Naive thymus-derived CD8-positive, alpha-beta T cell (primary cell): ENCODE measurements at regions of chr17 and their contacts with region 1.

Region 1: DNA sequence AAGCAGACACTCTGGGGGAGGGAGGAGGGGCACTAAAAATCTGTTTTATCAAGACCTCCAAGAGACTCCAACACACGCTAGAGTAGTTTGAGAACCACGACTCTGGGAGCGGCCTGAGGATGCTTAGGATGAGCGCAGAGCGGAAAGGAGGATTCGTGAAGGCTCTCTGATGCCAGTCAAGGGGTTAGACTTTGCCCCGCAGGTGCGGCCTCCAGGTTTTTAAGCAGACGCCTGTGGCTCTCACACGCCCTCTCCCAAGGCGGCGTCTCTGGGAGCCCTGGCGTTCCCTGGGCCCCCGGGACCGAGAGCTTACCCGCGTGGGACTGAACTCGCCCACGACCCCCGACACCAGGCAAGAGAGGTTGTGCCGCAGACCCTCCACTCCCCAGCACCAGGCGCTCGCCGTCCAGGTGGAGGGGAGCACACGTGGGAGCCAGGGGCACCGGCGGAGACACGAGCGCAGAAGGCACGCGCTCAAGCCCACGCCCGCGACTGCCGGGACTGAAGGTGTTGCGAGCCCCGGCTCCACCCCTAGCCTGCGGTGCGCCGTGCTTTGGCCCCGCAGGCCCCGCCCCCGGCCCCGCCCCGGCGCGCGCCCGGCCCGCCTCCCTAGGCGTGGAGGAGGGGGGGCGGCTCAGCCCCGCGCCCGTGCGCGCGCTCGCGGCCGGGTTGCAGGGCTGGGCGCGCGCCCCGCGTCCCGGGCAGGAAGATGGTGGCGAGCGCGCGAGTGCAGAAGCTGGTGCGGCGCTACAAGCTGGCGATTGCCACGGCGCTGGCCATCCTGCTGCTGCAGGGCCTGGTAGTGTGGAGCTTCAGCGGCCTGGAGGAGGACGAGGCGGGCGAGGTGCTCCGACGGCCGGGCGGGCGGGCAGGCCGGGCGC is at the start of gene XYLT2:
- DNase-seq: peak; percentile 85 to 99 (median 92)
- ATAC-seq: peak; percentile 88
- H3K4me3 Mint-ChIP-seq: peak within 1 kb of the TSS; percentile 86 to 95 (median 88)
- H3K27ac Mint-ChIP-seq: peak within 1 kb of the TSS; percentile 65 to 95 (median 92)
- H3K4me1 Mint-ChIP-seq: peaks cover 22 to 41% (median 37%) of the 10 kb centered on the region in 4 donors
- H3K27me3 Mint-ChIP-seq: no peaks in the 10 kb centered on the region
- polyA plus RNA-seq, gene XYLT2: 6.9 to 16.8 (median 7.4) TPM

Region 2: DNA sequence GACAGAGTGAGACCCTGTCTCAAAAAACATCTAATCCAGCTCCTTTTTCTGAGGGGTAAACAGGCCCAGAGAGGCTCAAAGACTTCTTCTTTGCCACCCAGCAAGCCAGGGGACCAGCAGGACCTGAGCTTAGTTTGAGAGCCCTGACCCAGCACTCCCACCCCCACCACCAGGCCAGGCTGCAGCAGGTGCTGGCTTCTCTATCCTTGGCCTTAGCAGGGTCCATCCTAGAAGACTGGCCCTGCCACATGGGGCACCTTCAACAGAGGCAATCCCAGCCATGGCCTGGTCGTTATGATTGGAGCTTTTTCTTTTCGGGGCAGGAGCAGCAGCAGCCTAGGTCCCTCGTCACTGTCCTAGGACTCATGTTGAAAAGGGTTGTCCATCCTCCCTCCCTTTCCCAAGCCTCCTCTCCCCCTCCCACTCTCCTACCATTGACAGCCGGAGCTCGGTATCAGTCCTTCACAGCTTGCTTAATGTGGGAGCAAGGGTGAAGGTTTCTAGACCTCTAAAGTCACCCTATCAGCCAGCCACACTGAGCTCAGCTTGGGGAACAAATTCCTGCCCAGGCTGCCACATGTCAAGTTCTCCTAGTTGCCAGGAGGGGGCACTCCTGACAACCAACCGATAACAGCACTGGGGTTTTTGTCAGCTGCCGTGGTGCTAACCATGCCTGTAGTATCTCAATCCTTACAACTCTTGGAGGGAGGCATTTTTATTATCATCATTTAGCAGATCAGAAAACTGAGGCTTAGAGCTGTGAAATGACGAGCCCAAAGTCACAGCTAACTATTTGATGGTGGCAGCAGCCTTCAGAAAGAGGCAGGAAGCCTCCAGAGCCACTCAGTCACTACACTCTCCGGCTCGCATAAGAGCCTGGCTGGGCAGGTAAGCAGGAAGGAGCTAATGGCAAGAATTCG is 16.1 kb after region 1 on chr17:
- POLR2A ChIA-PET with region 1: interaction called, 16 read pairs
- DNase-seq: peak; percentile 32 to 77 (median 54)
- ATAC-seq: peak; percentile 89 to 94
- H3K4me3 Mint-ChIP-seq: peak overlapping the region in 9 of 10 donors; percentile 21 to 58 (median 47)
- H3K27ac Mint-ChIP-seq: peak overlapping the region; percentile 59 to 93 (median 84)
- H3K4me1 Mint-ChIP-seq: peaks cover 9 to 30% (median 12%) of the 10 kb centered on the region in 4 donors
- H3K27me3 Mint-ChIP-seq: no peaks in the 10 kb centered on the region

Region 3: DNA sequence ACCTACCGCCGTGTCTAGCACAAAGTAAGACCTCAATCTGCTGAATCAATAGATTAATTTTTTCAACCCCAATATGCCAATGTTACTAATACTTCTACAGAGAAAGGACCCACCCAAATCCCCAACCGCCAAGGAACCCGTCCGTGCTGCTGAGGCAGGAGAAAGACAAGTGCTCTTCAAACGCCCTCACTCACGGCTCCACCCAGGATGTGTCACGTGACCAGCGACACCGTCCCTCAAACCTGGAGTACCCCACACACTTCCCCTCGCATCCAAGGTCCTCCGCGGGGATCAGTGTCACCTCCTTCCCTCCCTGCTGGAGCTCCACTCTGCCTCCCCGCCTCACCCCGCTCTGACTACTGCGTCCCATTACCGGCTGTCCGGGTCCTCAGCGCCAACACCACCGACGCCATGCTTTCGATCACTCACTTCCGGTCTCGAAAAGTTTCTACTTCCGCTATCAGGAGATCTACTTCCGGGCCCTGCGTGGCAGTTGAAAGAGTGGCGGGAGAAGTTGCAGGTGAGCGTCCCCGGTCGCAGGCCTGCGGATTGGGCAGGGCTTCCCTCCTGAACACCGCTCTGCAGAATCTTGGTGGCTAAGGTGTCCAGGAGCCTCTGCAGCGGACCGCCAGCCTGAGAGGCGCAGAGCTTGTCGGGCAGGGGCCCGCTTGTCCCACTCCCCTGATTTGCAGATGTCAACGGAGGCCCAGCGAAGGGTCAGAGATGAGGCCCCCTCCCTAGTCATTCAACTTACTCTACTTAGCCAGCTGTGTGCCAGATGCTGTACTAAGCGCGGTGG is 27.3 kb after region 1 on chr17 and contains the starts of genes EME1 and MRPL27:
- POLR2A ChIA-PET with region 1: interaction called, 15 read pairs
- DNase-seq: peak; percentile 69 to 99 (median 84)
- ATAC-seq: peak; percentile 94 to 95
- H3K4me3 Mint-ChIP-seq: peak within 1 kb of the TSS; percentile 90 to 100 (median 98)
- H3K27ac Mint-ChIP-seq: peak within 1 kb of the TSS; percentile 99 to 100 (median 100)
- H3K4me1 Mint-ChIP-seq: peaks cover 17 to 30% (median 23%) of the 10 kb centered on the region in 4 donors
- H3K27me3 Mint-ChIP-seq: no peaks in the 10 kb centered on the region
- polyA plus RNA-seq, gene EME1: 0.38 TPM in 1 of 3 donors, not detected in the others
- polyA plus RNA-seq, gene MRPL27: 28.7 to 60.6 (median 45.7) TPM